A673 (cell line): ENCODE measurements at regions of chr4 and their contacts with region 1.

Region 1: DNA sequence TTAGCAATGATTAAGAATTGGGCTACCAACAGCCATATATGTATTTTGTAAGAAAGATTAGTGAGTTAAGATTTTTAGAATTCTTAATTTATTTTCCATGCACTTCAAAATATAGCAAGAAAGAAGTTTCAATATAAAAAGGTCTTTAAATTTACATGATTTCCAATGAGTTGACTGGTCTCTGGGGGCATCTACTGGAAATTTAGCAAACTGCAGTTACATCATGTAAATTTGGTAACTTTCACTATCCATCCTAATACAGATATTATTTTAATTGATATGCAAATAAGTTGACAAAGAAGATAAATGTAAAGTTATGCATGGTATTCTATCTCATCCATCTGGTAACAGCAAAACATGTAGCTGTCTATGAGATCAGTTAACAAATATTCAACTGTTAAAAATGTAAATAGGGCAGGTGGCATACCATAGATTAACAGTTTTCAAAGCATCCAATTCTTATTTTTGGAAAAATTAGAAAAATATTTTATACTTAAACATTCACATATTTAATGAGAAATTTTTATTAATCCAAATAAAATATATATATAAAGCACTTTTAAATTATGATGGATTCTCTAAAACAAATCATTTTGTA is 29.1 kb downstream of the TTC29 start:
- DNase-seq: peak; percentile 72
- H3K4me3 ChIP-seq: no peak overlapping the region
- H3K27ac ChIP-seq: no peak overlapping the region
- H3K4me1 ChIP-seq: peaks cover 22% of the 10 kb centered on the region
- H3K27me3 ChIP-seq: no peaks in the 10 kb centered on the region
- CTCF ChIP-seq: peak; percentile 91

Region 2: DNA sequence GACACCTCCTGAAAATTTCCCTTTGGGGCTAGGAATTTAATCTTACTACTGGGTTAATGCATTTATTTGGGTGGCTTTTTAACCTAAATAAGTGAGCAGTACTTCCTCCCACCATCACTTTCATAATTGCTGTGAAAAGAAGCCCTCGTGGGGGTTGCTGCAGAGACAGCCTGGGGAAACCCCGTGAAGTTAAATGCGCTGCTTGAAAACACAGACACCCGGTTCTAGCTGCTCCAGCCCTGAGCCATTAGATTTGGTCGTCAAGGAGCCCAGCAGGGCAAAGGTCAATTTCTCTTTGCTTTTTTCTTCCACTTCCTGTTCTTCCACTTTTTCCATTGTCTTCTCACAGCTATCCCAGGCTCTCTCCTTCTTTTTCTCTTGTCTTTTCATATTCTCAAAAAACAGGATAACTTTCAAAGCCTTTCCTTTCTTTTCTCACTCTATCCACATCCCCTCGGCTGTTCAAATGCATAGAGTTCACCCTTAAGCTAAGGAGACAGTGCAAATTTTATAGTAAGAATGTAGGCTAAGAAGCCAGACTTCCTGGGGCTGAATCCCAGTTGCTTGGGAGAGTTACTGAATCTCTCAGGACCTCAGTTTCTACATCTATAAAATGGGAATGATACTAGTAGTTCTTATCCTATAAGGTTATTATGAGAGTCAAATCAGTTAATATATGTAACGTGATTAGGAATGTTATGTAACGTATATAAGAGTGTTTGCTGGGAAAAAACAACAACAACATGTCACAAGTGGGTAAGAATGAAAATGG is 886.5 kb before region 1 on chr4:
- CTCF ChIA-PET with region 1: no interaction called
- POLR2A ChIA-PET with region 1: no interaction called
- intact Hi-C with region 1: no loop called
- DNase-seq: no peak
- H3K4me3 ChIP-seq: no peak overlapping the region
- H3K27ac ChIP-seq: no peak overlapping the region
- H3K4me1 ChIP-seq: no peaks in the 10 kb centered on the region
- H3K27me3 ChIP-seq: no peaks in the 10 kb centered on the region
- CTCF ChIP-seq: no peak

Region 3: GRCh38 chr4:146222313-146222712 is 694.3 kb before region 1 on chr4:
- CTCF ChIA-PET with region 1: no interaction called
- POLR2A ChIA-PET with region 1: no interaction called
- intact Hi-C with region 1: no loop called
- DNase-seq: no peak
- H3K4me3 ChIP-seq: no peak overlapping the region
- H3K27ac ChIP-seq: no peak overlapping the region
- H3K4me1 ChIP-seq: no peaks in the 10 kb centered on the region
- H3K27me3 ChIP-seq: no peaks in the 10 kb centered on the region
- CTCF ChIP-seq: no peak

Region 4: GRCh38 chr4:146243141-146243882 is 673.3 kb before region 1 on chr4:
- CTCF ChIA-PET with region 1: no interaction called
- POLR2A ChIA-PET with region 1: no interaction called
- intact Hi-C with region 1: loop called (anchors 2 kb)
- DNase-seq: peak; percentile 45
- H3K4me3 ChIP-seq: no peak overlapping the region
- H3K27ac ChIP-seq: no peak overlapping the region
- H3K4me1 ChIP-seq: peaks cover 14% of the 10 kb centered on the region
- H3K27me3 ChIP-seq: no peaks in the 10 kb centered on the region
- CTCF ChIP-seq: peak; percentile 70

Region 5: DNA sequence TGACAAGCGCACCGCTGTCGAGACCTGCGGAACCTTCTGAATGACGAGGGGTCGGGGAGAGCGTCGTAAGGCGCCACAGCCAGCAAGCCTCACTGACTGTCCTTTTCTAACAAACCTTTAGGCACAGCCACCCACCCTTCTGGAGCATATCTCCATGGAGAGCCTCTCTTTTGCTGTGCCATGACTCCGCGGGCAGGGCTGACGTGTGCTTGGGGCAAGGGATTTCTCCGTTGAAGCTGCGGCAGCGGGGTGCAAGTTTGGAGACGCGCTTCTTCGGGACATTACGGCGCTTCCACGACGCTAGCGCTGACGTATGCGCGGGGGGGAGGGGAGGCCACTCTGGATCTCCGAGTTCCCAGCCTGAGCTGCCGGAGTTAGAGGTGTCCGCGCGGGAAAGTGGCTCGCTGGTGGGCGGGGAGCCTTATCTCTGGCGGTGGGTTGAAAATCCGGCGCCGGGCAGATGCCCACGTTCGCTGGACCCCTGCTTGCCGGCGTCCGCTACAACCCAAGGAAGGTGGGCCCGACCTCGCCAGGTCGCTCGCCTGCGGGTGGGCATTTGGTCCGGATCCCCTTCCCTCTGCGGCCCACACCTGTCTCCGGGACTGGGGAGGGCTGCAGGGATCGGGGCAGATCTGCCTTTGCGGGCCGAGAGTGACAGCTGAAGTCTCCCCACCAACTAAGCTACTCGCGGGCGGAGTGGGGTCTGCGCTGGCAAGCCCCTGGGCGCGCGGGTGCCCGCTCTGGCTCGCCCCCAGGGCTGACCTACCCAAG is 394.3 kb before region 1 on chr4:
- CTCF ChIA-PET with region 1: no interaction called
- POLR2A ChIA-PET with region 1: no interaction called
- intact Hi-C with region 1: loop called (anchors 10 kb)
- DNase-seq: peak; percentile 93
- H3K4me3 ChIP-seq: peak overlapping the region; percentile 81
- H3K27ac ChIP-seq: peak overlapping the region; percentile 95
- H3K4me1 ChIP-seq: peaks cover 19% of the 10 kb centered on the region
- H3K27me3 ChIP-seq: no peaks in the 10 kb centered on the region
- CTCF ChIP-seq: no peak

Region 6: DNA sequence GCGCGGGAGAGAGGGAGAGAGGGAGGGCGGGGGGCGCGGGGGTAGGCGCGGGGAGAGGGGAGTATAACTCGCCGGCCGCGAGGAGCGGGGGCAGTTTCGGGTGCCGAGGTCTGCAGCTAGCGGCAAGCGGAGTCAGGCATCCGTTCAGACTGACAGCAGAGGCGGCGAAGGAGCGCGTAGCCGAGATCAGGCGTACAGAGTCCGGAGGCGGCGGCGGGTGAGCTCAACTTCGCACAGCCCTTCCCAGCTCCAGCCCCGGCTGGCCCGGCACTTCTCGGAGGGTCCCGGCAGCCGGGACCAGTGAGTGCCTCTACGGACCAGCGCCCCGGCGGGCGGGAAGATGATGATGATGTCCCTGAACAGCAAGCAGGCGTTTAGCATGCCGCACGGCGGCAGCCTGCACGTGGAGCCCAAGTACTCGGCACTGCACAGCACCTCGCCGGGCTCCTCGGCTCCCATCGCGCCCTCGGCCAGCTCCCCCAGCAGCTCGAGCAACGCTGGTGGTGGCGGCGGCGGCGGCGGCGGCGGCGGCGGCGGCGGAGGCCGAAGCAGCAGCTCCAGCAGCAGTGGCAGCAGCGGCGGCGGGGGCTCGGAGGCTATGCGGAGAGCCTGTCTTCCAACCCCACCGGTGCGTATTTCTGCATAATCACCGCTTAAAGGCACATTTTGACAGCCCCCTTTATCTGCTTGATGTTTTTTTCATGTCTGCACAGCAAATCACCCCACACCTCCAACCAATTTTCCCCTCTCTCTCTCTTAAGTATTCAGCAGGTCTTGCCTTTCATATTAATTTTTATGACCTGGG is 277.6 kb before region 1 on chr4 and contains the start of gene POU4F2:
- CTCF ChIA-PET with region 1: interaction called, 3 read pairs
- POLR2A ChIA-PET with region 1: no interaction called
- intact Hi-C with region 1: loop called (anchors 5 kb)
- DNase-seq: peak; percentile 85
- H3K4me3 ChIP-seq: peak within 1 kb of the TSS; percentile 61
- H3K27ac ChIP-seq: no peak within 1 kb of the TSS
- H3K4me1 ChIP-seq: peaks cover 10% of the 10 kb centered on the region
- H3K27me3 ChIP-seq: peaks cover 38% of the 10 kb centered on the region
- CTCF ChIP-seq: no peak
- total RNA-seq, gene POU4F2: 2.6 and 4.6 TPM in 2 replicates

Region 7: GRCh38 chr4:147590249-147590920 is 673.8 kb after region 1 on chr4:
- CTCF ChIA-PET with region 1: no interaction called
- POLR2A ChIA-PET with region 1: no interaction called
- intact Hi-C with region 1: loop called (anchors 5 kb)
- DNase-seq: peak; percentile 87
- H3K4me3 ChIP-seq: no peak overlapping the region
- H3K27ac ChIP-seq: no peak overlapping the region
- H3K4me1 ChIP-seq: peaks cover 10% of the 10 kb centered on the region
- H3K27me3 ChIP-seq: no peaks in the 10 kb centered on the region
- CTCF ChIP-seq: peak; percentile 84